Mammary epithelial cell (primary cell): ENCODE measurements at regions of chr2 and their contacts with region 1.

Region 1: DNA sequence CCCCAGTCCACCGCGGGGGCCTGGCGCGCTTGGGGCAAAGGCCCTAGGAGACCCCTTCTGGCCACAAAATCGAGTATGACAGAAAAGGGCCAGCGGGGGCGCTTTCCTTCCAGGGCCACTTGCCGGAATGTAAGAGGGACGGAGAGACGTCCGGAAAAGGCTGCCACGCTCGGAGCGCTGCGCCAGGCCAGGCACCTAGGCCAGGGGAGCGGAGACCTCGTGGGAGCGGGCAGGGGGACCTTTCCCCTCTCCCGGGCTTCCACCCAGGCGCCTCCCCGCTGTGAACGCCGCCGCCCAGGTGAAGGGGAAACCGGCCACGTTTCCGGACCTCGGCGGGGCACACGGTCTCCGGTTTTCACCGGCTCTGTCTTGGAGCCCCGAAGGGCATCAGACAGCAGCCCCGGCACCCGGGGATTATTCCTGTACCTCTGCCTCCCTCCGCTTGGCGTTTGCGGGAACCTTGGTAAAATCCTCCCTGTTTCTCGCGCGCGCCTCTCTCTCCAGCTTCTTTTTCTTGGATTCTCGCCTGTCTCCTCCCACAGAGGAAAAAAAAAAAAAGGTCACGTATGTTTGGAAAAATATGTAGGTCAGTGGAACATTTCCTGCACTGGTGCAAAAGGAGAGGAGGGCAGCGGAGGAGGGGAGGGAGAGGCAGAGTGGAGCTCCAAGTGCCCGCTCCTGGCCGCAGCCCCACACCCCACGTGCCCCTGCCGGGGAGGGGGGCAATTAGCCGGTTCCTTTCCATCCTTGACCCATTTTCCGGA is 1.2 kb upstream of the NPAS2 start:
- DNase-seq: peak; percentile 76
- H3K4me3 ChIP-seq: peak overlapping the region; percentile 51 to 89 (median 77)
- H3K27ac ChIP-seq: peak overlapping the region; percentile 93
- H3K4me1 ChIP-seq: peaks cover 28% of the 10 kb centered on the region
- H3K27me3 ChIP-seq: no peaks in the 10 kb centered on the region
- CTCF ChIP-seq: peak in 1 of 2 donors; percentile 35

Region 2: DNA sequence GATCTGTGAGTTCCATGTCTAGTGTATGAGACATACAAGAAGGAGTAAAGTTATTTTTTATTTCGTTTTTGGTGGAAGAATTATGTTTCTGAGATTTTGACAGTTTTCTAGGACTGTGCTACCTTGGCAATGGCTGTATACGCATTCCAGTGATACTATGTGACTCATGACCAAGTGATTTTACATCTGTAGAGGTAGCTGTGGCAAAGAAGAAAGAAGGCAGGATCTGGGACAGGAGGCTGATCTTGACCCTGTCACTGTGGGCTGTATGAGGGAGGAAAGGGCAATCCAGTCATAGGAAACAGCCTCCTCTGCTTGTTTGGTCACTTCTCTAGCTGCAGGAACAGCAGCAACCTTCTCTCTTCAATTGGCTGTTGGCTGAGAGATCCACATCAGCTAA is 300.0 kb before region 1 on chr2:
- CTCF ChIA-PET with region 1: no interaction called
- dilution Hi-C with region 1: no loop called
- in situ Hi-C with region 1: no loop called
- intact Hi-C with region 1: no loop called
- DNase-seq: peak; percentile 8
- H3K4me3 ChIP-seq: no peak overlapping the region
- H3K27ac ChIP-seq: no peak overlapping the region
- H3K4me1 ChIP-seq: no peaks in the 10 kb centered on the region
- H3K27me3 ChIP-seq: peaks cover 2% of the 10 kb centered on the region
- CTCF ChIP-seq: no peak

Region 3: DNA sequence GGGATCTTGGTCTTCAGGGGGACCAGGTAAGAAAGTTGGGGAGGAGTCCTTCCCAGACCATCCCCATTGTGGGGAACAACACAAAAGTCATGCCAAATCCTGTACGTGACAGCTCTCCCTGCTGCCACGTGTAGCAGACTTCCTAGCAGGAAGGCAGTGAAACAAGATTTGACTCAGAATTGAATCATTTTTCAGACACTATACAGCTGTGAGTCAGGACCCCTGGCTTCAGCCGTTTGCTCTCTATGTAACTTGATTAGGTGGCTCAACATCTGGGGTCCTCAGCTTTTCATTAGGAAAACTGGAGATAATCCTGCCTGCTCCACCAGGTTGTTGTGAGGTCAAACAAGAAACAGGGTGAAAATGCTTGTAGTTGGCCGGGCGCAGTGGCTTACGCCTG is 288.9 kb before region 1 on chr2:
- CTCF ChIA-PET with region 1: interaction called, 10 read pairs
- dilution Hi-C with region 1: no loop called
- in situ Hi-C with region 1: no loop called
- intact Hi-C with region 1: no loop called
- DNase-seq: no peak
- H3K4me3 ChIP-seq: no peak overlapping the region
- H3K27ac ChIP-seq: no peak overlapping the region
- H3K4me1 ChIP-seq: no peaks in the 10 kb centered on the region
- H3K27me3 ChIP-seq: no peaks in the 10 kb centered on the region
- CTCF ChIP-seq: no peak

Region 4: DNA sequence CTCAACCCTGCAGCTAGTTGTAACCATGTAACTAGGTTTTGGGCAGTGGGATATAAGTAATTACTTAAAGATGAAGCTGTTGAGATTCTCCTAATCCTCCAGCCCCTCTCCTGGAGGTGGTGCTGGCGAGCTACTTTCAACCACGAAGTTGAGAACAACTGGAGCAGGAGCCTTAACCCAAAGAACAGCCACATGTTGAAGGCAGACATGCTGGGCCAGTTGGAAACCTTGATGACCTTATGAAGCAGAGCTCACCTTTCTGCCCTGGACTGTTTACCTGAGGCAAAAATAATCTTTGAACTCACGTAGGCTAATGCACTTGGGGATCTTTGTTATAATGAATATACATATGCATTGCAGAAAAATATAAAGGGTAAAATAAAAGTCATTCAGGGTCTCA is 88.4 kb before region 1 on chr2:
- CTCF ChIA-PET with region 1: interaction called, 10 read pairs
- dilution Hi-C with region 1: loop called (anchors 5 kb)
- in situ Hi-C with region 1: loop called in 1 of 2 experiments (anchors 5 kb)
- intact Hi-C with region 1: loop called (anchors 1 kb)
- DNase-seq: peak; percentile 74
- H3K4me3 ChIP-seq: no peak overlapping the region
- H3K27ac ChIP-seq: no peak overlapping the region
- H3K4me1 ChIP-seq: peaks cover 26% of the 10 kb centered on the region
- H3K27me3 ChIP-seq: no peaks in the 10 kb centered on the region
- CTCF ChIP-seq: peak; percentile 76 to 90

Region 5: GRCh38 chr2:100752628-100753333 is 66.0 kb before region 1 on chr2:
- CTCF ChIA-PET with region 1: no interaction called
- dilution Hi-C with region 1: no loop called
- in situ Hi-C with region 1: no loop called
- intact Hi-C with region 1: loop called (anchors 1 kb)
- DNase-seq: peak; percentile 92
- H3K4me3 ChIP-seq: peak overlapping the region in 1 of 3 experiments; percentile 5
- H3K27ac ChIP-seq: peak overlapping the region; percentile 100
- H3K4me1 ChIP-seq: peaks cover 72% of the 10 kb centered on the region
- H3K27me3 ChIP-seq: no peaks in the 10 kb centered on the region
- CTCF ChIP-seq: no peak

Region 6: GRCh38 chr2:100786297-100786658 is 32.5 kb before region 1 on chr2:
- CTCF ChIA-PET with region 1: no interaction called
- dilution Hi-C with region 1: no loop called
- in situ Hi-C with region 1: no loop called
- intact Hi-C with region 1: loop called (anchors 1 kb)
- DNase-seq: peak; percentile 95
- H3K4me3 ChIP-seq: peak overlapping the region in 2 of 3 experiments; percentile 11 to 19
- H3K27ac ChIP-seq: peak overlapping the region; percentile 92
- H3K4me1 ChIP-seq: peaks cover 46% of the 10 kb centered on the region
- H3K27me3 ChIP-seq: no peaks in the 10 kb centered on the region
- CTCF ChIP-seq: no peak

Region 7: GRCh38 chr2:100857915-100858314 is 39.1 kb after region 1 on chr2:
- CTCF ChIA-PET with region 1: no interaction called
- dilution Hi-C with region 1: no loop called
- in situ Hi-C with region 1: no loop called
- intact Hi-C with region 1: loop called (anchors 5 kb)
- DNase-seq: no peak
- H3K4me3 ChIP-seq: no peak overlapping the region
- H3K27ac ChIP-seq: no peak overlapping the region
- H3K4me1 ChIP-seq: no peaks in the 10 kb centered on the region
- H3K27me3 ChIP-seq: no peaks in the 10 kb centered on the region
- CTCF ChIP-seq: no peak

Region 8: DNA sequence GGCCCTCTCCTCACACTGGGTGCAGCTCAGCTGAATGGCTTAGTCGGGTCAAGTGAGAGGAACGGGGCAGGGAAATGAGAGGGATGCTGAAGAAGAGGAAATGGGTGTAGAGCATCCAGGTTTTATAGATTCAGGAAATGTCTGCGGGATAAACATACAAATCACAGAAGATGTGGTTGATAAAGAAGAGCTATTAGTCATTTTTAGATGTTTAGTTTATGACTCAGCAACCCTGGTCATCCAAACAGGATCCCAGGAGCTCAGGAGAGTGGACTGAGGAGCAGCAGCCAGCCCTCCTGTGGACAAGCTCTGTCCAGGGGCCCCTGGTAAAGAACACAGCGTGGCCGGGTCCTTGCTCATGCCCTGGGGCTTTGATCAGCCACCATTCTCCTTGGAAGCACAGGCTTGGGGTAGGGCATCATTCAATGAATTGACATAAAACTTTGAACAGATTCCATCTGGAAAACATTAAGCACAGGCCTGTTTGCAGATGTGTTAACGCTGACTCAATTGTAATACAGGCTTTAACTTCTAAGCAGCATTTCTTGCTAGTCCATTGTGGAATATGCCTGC is 84.1 kb after region 1 on chr2:
- CTCF ChIA-PET with region 1: no interaction called
- dilution Hi-C with region 1: no loop called
- in situ Hi-C with region 1: no loop called
- intact Hi-C with region 1: loop called (anchors 1 kb)
- DNase-seq: peak; percentile 92
- H3K4me3 ChIP-seq: no peak overlapping the region
- H3K27ac ChIP-seq: peak overlapping the region; percentile 50
- H3K4me1 ChIP-seq: peaks cover 46% of the 10 kb centered on the region
- H3K27me3 ChIP-seq: no peaks in the 10 kb centered on the region
- CTCF ChIP-seq: peak in 1 of 2 donors; percentile 8

Region 9: DNA sequence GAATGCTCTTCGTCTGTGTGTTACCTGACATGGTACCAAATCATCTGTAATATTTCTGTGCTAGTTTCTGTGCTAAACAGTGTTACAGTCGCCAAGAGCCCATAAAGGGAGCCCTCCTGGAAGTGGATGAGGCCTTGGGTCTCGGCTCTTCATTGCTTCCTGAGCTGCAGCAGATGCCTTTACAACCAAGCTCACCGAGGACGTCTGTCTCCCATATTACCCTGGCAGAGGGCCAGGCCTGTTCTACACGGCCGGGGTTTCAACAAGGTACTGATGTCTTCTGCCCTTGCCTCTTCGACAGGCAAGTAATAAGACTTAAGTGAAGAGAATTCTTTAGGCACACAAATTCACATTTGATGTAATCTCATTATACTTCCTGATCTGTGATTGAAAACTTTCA is 200.1 kb after region 1 on chr2:
- CTCF ChIA-PET with region 1: no interaction called
- dilution Hi-C with region 1: no loop called
- in situ Hi-C with region 1: no loop called
- intact Hi-C with region 1: no loop called
- DNase-seq: no peak
- H3K4me3 ChIP-seq: no peak overlapping the region
- H3K27ac ChIP-seq: no peak overlapping the region
- H3K4me1 ChIP-seq: no peaks in the 10 kb centered on the region
- H3K27me3 ChIP-seq: no peaks in the 10 kb centered on the region
- CTCF ChIP-seq: no peak

Region 10: DNA sequence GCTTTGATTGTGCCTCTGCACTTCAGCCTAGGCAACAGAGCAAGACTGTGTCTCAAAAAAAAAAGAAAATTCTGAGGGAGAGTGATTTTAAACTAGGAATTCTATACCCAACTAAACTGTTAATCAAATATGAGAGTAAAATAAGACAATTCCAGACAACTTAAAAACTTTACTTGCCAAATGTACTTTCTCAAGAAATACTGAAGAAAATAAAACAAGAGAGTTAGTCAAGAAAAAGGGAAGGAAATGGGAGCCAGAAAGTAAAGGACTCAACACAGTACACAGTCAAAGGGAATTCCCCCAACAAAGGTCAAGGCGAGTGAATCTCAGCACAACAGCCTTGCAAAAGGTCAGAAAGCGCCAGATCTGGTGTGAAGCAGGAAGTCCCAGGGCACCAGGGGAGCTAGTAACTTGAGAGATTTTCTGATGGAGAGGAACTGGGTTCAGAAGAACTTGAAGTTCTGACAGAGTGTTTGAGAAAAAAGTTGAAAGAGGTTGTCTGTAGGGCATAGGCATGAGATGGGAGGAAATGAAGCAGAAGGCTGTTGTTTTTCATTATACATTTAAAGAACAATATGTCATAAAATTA is 355.0 kb after region 1 on chr2:
- CTCF ChIA-PET with region 1: no interaction called
- dilution Hi-C with region 1: no loop called
- in situ Hi-C with region 1: no loop called
- intact Hi-C with region 1: no loop called
- DNase-seq: no peak
- H3K4me3 ChIP-seq: no peak overlapping the region
- H3K27ac ChIP-seq: no peak overlapping the region
- H3K4me1 ChIP-seq: peaks cover 6% of the 10 kb centered on the region
- H3K27me3 ChIP-seq: no peaks in the 10 kb centered on the region
- CTCF ChIP-seq: no peak